ENCODE measurements at regions of chr3 and their contacts with region 1.

Region 1: GRCh38 chr3:16550676-16551341 is 37.3 kb upstream of the RFTN1 start:
- DNase-seq: peak; percentile 73
- ATAC-seq: peak; percentile 92

Region 2: DNA sequence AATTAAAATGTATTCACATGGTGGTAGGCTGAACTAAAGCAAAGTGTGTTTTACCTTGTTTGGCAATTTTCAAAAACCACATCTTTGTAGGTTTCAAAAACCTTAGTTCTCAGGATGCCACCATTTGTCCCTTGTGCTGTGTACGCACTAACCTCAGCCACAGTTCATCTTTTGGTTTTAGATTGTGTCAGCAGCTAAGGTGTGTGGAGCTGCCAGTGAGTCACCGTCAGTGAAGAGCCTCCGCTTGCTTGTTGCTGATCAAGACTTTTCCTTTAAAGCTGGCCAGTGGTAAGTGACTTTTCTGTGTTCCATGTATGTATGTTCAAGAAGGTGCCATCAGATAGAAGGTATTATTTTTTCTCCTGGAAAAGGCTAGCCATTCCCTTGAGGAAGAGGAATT is 264.6 kb before region 1 on chr3:
- intact Hi-C with region 1: loop called (anchors 5 kb)
- DNase-seq: no peak
- ATAC-seq: no peak

Measured in sciatic nerve (tissue), 2 donors.